ENCODE measurements at regions of chrX and their contacts with region 1.

Region 1: DNA sequence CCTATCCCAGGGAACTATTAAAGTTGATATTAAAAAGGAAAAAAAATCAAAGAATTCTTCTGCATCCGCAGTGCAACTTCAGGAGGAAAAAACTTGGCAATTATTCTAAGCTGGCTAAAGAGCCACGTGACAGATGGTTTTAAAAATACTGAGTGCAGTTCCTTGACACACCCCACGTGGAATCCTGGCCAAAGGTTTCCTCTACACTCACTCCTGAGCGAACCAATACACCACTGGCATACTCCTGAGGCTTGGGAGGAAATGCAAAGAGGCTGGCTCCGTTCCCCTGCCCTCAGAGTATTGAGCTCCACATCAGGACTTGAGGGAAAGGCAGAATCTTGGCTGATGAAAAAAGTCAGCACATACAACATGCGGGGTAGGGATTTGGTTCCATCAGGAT is 133.8 kb upstream of the ATP6AP2 start:
- DNase-seq: no peak
- ATAC-seq: no peak
- H3K4me3 ChIP-seq: no peak overlapping the region
- H3K4me3 Mint-ChIP-seq: no peak overlapping the region
- H3K27ac ChIP-seq: no peak overlapping the region
- H3K27ac Mint-ChIP-seq: no peak overlapping the region
- H3K4me1 ChIP-seq: no peaks in the 10 kb centered on the region
- H3K4me1 Mint-ChIP-seq: no peaks in the 10 kb centered on the region
- H3K27me3 ChIP-seq: no peaks in the 10 kb centered on the region
- H3K27me3 Mint-ChIP-seq: no peaks in the 10 kb centered on the region
- CTCF ChIP-seq: no peak

Region 2: DNA sequence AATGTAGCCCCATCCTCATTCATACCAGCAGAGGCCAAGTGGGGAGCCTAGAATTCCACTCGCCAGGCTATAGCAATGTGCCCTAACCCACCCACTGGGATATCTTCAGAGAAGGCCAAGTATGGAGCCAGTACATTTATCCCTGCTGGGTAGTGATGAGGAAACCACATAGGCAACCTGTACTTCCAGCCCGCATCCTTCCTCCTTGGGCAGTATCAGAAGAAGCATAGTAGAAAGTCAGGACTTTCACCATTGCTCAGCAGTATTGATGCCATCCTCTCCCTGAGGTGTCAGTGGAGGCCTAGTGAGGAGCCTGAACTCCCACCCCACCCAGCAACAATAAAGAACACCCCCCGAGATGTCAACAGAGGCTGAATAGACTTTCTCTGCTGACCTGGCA is 452.9 kb after region 1 on chrX:
- CTCF ChIA-PET with region 1: no interaction called
- POLR2A ChIA-PET with region 1: no interaction called
- intact Hi-C with region 1: loop called in 1 of 2 experiments (anchors 5 kb)
- DNase-seq: no peak
- ATAC-seq: no peak
- H3K4me3 ChIP-seq: no peak overlapping the region
- H3K4me3 Mint-ChIP-seq: no peak overlapping the region
- H3K27ac ChIP-seq: no peak overlapping the region
- H3K27ac Mint-ChIP-seq: no peak overlapping the region
- H3K4me1 ChIP-seq: no peaks in the 10 kb centered on the region
- H3K4me1 Mint-ChIP-seq: no peaks in the 10 kb centered on the region
- H3K27me3 ChIP-seq: no peaks in the 10 kb centered on the region
- H3K27me3 Mint-ChIP-seq: no peaks in the 10 kb centered on the region
- CTCF ChIP-seq: no peak